MCF 10A (cell line): ENCODE measurements at regions of chr2 and their contacts with region 1.

Region 1: DNA sequence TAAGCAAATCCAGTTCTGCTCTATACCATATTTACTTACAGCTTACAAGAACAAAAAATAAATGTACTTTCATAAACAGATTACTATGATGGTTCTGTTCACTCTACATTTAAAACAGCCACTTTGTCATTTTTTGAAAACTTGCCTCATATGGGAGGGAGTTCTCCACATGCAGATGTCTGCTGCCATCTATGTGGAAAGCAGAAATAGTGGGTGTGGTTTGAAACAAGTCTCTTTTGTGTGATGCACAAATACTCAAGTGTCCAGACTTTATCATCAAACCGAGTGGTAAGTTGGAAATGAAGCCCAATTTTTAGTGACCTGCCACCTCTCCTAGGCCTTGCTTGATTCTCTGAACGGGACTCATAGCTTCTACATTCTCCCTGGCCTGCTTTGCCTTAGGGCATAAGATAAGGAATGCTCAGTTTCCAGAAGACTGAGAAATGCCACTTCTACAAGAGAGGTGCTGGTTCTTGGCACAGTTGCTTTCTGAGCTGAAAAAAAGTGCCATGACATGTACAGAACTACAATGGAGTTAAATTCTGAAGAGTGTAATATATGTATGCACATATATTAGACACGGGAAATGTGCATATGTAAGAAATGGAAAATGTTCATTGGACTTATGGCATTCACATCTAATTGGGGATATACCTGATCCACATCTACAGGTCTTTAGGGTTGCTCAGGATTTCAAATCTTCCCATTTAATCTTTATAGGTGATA is 221.0 kb downstream of the SLC8A1 start:
- DNase-seq: peak; percentile 22
- H3K4me3 Mint-ChIP-seq: no peak overlapping the region
- H3K27ac Mint-ChIP-seq: no peak overlapping the region
- H3K4me1 Mint-ChIP-seq: no peaks in the 10 kb centered on the region
- H3K27me3 Mint-ChIP-seq: no peaks in the 10 kb centered on the region
- CTCF ChIP-seq: no peak

Region 2: GRCh38 chr2:40218679-40219078 is 12.2 kb before region 1 on chr2:
- CTCF ChIA-PET with region 1: interaction called, 8 read pairs
- POLR2A ChIA-PET with region 1: interaction called, 14 read pairs
- intact Hi-C with region 1: no loop called
- DNase-seq: peak; percentile 75
- H3K4me3 Mint-ChIP-seq: no peak overlapping the region
- H3K27ac Mint-ChIP-seq: no peak overlapping the region
- H3K4me1 Mint-ChIP-seq: peaks cover 15% of the 10 kb centered on the region
- H3K27me3 Mint-ChIP-seq: no peaks in the 10 kb centered on the region
- CTCF ChIP-seq: no peak